H1 (cell line): ENCODE measurements at regions of chr14 and their contacts with region 1.

Region 1: GRCh38 chr14:100108042-100108825 is 43.0 kb downstream of the EVL start:
- DNase-seq: peak; percentile 72 to 98
- H3K4me3 ChIP-seq: no peak overlapping the region
- H3K27ac ChIP-seq: no peak overlapping the region
- H3K4me1 ChIP-seq: no peaks in the 10 kb centered on the region
- H3K27me3 ChIP-seq: no peaks in the 10 kb centered on the region
- CTCF ChIP-seq: peak; percentile 87 to 98 (median 95)
- EP300 ChIP-seq: no peak
- POLR2A ChIP-seq: no peak
- RAD21 ChIP-seq: peak; percentile 80 to 85

Region 2: GRCh38 chr14:100025111-100025510 is 83.1 kb before region 1 on chr14:
- CTCF ChIA-PET with region 1: interaction called, 10 read pairs
- POLR2A ChIA-PET with region 1: no interaction called
- DNase-seq: peak in 1 of 2 experiments; percentile 29
- H3K4me3 ChIP-seq: no peak overlapping the region
- H3K27ac ChIP-seq: no peak overlapping the region
- H3K4me1 ChIP-seq: no peaks in the 10 kb centered on the region
- H3K27me3 ChIP-seq: peaks cover 0 to 2% (median 0%) of the 10 kb centered on the region in 4 experiments; a peak in 2 of 7 replicates
- CTCF ChIP-seq: peak; percentile 68 to 80 (median 73)
- EP300 ChIP-seq: no peak
- POLR2A ChIP-seq: no peak
- RAD21 ChIP-seq: peak; percentile 70 to 79

Region 3: DNA sequence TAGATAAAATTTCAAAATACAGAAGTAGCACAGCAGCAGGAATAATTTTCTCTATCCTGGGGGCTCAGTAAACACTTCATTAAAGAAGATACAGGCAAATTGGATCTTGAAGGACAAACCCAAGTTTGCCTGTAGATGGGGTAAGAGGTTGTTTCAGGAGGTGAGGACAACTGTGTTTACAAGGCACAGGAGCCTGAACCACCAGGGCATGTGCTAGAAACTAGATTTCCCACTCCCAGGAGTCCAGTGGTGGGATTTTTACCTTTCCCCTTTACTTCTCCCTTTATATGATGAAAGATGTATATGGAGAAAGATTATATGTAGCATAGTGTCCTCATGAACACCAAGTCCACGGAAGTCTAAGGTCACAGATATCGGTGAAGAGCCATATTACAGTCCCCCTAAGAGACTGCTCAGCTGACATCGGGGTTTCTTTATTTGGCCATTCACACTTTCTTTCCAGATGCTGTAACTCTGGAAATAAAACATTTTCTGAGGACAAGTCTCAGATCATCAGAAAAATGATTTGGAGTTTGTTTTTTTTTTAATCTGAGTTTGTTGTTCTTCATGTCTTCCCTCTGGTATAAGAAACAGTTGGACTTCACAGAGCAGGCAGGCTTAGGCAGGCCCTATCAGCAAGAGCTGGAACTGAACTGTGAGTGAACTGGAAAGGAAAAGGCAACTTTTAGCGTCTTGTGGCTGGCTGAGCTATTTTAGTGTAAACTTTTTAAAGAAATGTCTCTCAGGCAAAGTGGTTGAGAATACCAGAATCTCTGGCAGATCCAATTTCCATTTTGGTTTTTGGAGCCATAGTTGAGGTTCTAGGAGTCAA is 51.1 kb before region 1 on chr14:
- CTCF ChIA-PET with region 1: interaction called, 21 read pairs
- POLR2A ChIA-PET with region 1: no interaction called
- DNase-seq: no peak
- H3K4me3 ChIP-seq: no peak overlapping the region
- H3K27ac ChIP-seq: no peak overlapping the region
- H3K4me1 ChIP-seq: no peaks in the 10 kb centered on the region
- H3K27me3 ChIP-seq: no peaks in the 10 kb centered on the region
- CTCF ChIP-seq: peak in 2 of 3 experiments; percentile 54 to 55; a peak in 3 of 4 replicates
- EP300 ChIP-seq: no peak
- POLR2A ChIP-seq: no peak
- RAD21 ChIP-seq: peak; percentile 56 to 64

Region 4: DNA sequence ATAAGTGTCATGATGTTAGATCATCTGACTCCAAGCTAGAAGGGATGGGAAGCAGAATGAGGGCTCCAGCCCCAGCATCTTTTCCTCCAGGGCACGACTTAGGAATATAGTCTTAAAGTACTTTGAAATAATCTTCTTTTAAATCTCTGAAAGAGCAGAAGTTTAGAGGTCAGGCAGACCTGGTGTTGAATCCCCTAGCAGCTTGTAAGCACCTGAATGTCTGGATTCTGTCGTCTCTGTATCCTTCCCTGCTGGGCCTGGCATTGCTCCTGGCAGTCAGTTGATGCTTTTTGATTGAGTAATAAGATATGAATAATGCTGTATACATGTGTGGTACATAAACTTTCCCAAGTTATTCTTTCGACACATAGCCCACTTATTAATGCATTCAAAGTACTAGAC is 11.7 kb before region 1 on chr14:
- CTCF ChIA-PET with region 1: interaction called, 26 read pairs
- POLR2A ChIA-PET with region 1: no interaction called
- DNase-seq: no peak
- H3K4me3 ChIP-seq: no peak overlapping the region
- H3K27ac ChIP-seq: no peak overlapping the region
- H3K4me1 ChIP-seq: no peaks in the 10 kb centered on the region
- H3K27me3 ChIP-seq: no peaks in the 10 kb centered on the region
- CTCF ChIP-seq: no peak
- EP300 ChIP-seq: no peak
- POLR2A ChIP-seq: no peak
- RAD21 ChIP-seq: no peak

Region 5: GRCh38 chr14:100155042-100155846 is 47.0 kb after region 1 on chr14:
- CTCF ChIA-PET with region 1: interaction called, 32 read pairs
- POLR2A ChIA-PET with region 1: no interaction called
- DNase-seq: peak; percentile 73 to 93
- H3K4me3 ChIP-seq: no peak overlapping the region
- H3K27ac ChIP-seq: no peak overlapping the region
- H3K4me1 ChIP-seq: peaks cover 0 to 11% (median 2%) of the 10 kb centered on the region in 4 experiments; a peak in 5 of 7 replicates
- H3K27me3 ChIP-seq: peaks cover 12 to 31% (median 26%) of the 10 kb centered on the region in 4 experiments
- CTCF ChIP-seq: peak in 2 of 3 experiments; percentile 95 to 99; a peak in 3 of 4 replicates
- EP300 ChIP-seq: 0 out of 3 replicates have a peak, but pooled peaks of 1 of the 2 experiments have one; percentile 22
- POLR2A ChIP-seq: no peak
- RAD21 ChIP-seq: peak; percentile 78 to 82

Region 6: GRCh38 chr14:100383727-100384158 is 275.5 kb after region 1 on chr14:
- CTCF ChIA-PET with region 1: no interaction called
- POLR2A ChIA-PET with region 1: no interaction called
- DNase-seq: peak in 1 of 2 experiments; percentile 87
- H3K4me3 ChIP-seq: no peak overlapping the region
- H3K27ac ChIP-seq: no peak overlapping the region
- H3K4me1 ChIP-seq: peaks cover 0 to 9% (median 0%) of the 10 kb centered on the region in 4 experiments; a peak in 3 of 7 replicates
- H3K27me3 ChIP-seq: no peaks in the 10 kb centered on the region
- CTCF ChIP-seq: peak; percentile 93 to 97 (median 97)
- EP300 ChIP-seq: no peak
- POLR2A ChIP-seq: no peak
- RAD21 ChIP-seq: peak; percentile 88 to 89